Body of pancreas (tissue), 4 donors: ENCODE measurements at regions of chr1 and their contacts with region 1.

Region 1: DNA sequence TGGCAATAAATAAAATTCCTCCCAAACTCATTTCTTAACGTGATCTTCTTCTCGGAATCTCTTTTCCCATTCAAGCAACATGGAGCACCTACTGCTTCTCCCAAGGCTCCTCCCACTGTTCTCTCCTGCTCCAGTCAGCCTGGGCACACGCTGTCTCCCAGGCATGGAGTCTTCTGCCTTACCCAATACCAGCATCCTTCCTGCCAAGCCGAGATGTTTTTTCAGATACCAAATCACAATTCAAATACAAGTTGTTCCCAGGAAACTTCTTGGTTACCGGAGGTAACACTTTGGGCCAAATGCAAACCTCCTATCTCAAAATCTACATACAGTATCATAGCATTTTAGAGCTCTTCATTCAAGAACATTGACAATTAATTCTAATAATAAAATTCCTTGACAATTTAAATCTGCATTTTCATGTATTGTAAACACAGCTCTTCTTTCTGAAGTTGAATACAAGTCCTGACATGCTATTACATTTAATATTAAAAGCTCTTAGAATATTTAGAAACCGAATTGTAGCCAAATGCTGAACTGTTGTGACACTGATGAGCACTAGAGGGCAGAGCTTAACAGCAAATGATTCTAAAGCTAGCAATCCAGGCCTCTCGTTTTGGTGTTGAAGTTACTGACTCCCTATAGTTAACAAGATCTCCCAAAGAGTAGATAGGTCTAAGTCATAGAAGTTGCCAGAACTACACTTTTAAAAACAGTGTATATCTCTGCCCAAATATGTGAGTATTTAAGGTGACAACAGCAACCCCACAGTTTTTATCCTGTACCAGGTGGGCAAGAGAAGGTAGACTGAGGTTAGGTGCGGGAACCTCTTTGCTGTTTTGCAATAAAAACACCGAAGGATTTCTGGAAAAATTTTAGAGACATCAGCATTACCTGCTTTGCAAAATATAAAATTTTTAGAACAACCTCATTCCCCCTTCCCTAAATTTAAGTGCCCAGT is 52.3 kb downstream of the BCAR3 start:
- DNase-seq: peak; percentile 55 to 74 (median 60)
- ATAC-seq: peak; percentile 85
- H3K4me3 ChIP-seq: no peak overlapping the region
- H3K27ac ChIP-seq: no peak overlapping the region
- H3K4me1 ChIP-seq: no peaks in the 10 kb centered on the region
- H3K27me3 ChIP-seq: no peaks in the 10 kb centered on the region
- CTCF ChIP-seq: peak; percentile 31 to 92 (median 80)
- POLR2A ChIP-seq: no peak

Region 2: GRCh38 chr1:93344886-93345632 is 284.3 kb before region 1 on chr1:
- intact Hi-C with region 1: no loop called
- DNase-seq: no peak
- ATAC-seq: peak; percentile 3
- H3K4me3 ChIP-seq: peak overlapping the region; percentile 77 to 98
- H3K27ac ChIP-seq: peak overlapping the region; percentile 87 to 96 (median 92)
- H3K4me1 ChIP-seq: peaks cover 7% of the 10 kb centered on the region
- H3K27me3 ChIP-seq: no peaks in the 10 kb centered on the region
- CTCF ChIP-seq: no peak
- POLR2A ChIP-seq: no peak

Region 3: GRCh38 chr1:93437976-93438605 is 191.3 kb before region 1 on chr1:
- intact Hi-C with region 1: loop called (anchors 10 kb)
- DNase-seq: no peak
- ATAC-seq: peak; percentile 79
- H3K4me3 ChIP-seq: no peak overlapping the region
- H3K27ac ChIP-seq: no peak overlapping the region
- H3K4me1 ChIP-seq: peaks cover 14% of the 10 kb centered on the region
- H3K27me3 ChIP-seq: no peaks in the 10 kb centered on the region
- CTCF ChIP-seq: peak; percentile 20 to 85 (median 77)
- POLR2A ChIP-seq: no peak